GM12878 (cell line): ENCODE measurements at regions of chr6 and their contacts with region 1.

Region 1: GRCh38 chr6:30616811-30617564 is at the start of gene PPP1R10:
- DNase-seq: peak; percentile 100
- ATAC-seq: peak; percentile 81
- H3K4me3 ChIP-seq: peak within 1 kb of the TSS; percentile 80
- H3K27ac ChIP-seq: peak within 1 kb of the TSS; percentile 99
- H3K4me1 ChIP-seq: peaks cover 3% of the 10 kb centered on the region
- H3K27me3 ChIP-seq: no peaks in the 10 kb centered on the region
- CTCF ChIP-seq: no peak
- EP300 ChIP-seq: no peak; a peak in 1 of 4 replicates
- POLR2A ChIP-seq: peak; percentile 97
- RAD21 ChIP-seq: no peak
- polyA plus RNA-seq, gene PPP1R10: 11.3 to 22.6 TPM

Region 2: GRCh38 chr6:29051680-29052079 is 1565.3 kb before region 1 on chr6:
- CTCF ChIA-PET with region 1: no interaction called
- POLR2A ChIA-PET with region 1: no interaction called
- RAD21 ChIA-PET with region 1: no interaction called
- SMC1A ChIA-PET with region 1: no interaction called
- in situ Hi-C with region 1: no loop called
- intact Hi-C with region 1: no loop called
- DNase-seq: no peak
- ATAC-seq: no peak
- H3K4me3 ChIP-seq: no peak overlapping the region
- H3K27ac ChIP-seq: no peak overlapping the region
- H3K4me1 ChIP-seq: no peaks in the 10 kb centered on the region
- H3K27me3 ChIP-seq: no peaks in the 10 kb centered on the region
- CTCF ChIP-seq: no peak
- EP300 ChIP-seq: no peak
- POLR2A ChIP-seq: no peak
- RAD21 ChIP-seq: no peak

Region 3: DNA sequence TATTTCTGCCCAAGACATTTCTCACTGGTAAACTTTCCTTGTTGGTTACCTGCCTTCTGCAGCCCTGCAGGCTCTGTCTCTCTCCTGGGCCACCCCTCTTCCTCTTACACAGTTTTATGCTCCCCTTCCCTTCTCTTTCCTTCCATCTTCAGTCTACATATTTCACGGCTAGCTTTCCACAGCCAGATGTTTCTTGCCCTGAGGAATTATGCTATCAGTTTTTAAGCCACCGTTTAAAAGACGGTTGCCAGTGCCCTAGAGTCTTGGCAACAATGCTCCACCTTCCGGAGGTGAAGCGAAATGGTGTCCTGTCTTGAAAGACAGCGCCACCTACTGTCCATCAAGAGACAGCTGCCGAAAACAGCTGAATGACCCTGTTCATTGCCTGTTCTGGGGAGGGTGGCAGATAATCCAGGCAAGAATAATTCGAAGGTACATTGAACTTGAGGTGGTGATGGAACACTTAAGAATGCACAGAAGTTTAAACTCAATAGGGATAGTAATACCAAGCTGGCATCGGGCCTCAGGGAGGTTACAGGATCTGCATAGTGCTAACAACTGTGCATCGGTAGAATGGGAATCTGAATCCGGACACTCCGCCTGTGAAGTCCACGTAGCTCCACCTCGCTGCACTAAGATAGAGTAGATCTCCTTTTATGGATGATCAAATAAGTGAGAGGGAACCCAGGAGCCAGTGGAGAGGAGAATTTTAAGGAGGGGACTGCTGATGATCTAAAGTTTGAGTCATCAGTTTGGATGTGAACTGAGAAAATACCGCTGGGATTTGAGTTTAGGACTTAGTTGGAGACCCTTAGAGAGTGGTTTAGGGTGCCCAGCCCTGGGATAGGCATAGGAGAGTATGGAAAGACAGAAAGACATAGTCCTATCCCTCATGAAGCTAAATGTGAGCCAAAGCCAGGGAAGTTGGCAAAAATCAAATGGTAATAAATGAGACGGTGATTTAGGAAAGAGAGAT is 485.8 kb before region 1 on chr6:
- CTCF ChIA-PET with region 1: no interaction called
- POLR2A ChIA-PET with region 1: no interaction called
- RAD21 ChIA-PET with region 1: no interaction called
- SMC1A ChIA-PET with region 1: no interaction called
- in situ Hi-C with region 1: no loop called
- intact Hi-C with region 1: no loop called
- DNase-seq: peak; percentile 32
- ATAC-seq: peak; percentile 97
- H3K4me3 ChIP-seq: no peak overlapping the region
- H3K27ac ChIP-seq: no peak overlapping the region
- H3K4me1 ChIP-seq: peaks cover 5% of the 10 kb centered on the region
- H3K27me3 ChIP-seq: peaks cover 4 to 10% of the 10 kb centered on the region in 2 experiments
- CTCF ChIP-seq: peak; percentile 98 to 100 (median 100); a peak in 5 of 6 replicates
- EP300 ChIP-seq: no peak
- POLR2A ChIP-seq: no peak
- RAD21 ChIP-seq: peak; percentile 81

Region 4: DNA sequence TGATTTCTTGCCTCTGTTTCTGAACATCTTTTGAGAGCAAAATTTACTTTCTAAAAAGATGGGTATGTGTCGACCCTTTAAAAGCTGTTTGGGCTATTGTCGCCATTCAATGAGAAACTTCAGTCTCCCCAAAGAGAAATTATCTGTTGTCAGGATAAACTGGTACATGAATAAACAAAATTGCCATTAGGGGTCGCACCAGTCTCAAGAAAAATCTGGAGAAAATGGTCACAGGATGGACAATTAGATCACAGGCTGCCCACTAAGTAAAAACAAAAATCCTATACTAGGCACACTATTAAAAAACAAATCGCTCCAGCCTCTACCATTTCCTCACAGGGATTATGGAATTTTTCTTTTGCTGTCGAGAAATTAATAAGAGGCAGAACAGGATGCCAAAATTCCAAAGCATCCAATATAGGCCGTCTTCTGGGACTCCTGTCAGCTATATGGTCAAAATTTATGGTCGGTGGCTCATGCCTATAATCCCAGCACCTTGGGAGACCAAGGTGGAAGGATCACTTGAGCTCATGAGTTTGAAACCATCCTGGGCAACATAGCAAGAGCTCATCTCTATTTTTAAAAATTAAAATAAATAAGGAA is 133.2 kb before region 1 on chr6:
- CTCF ChIA-PET with region 1: interaction called, 17 read pairs
- POLR2A ChIA-PET with region 1: no interaction called
- RAD21 ChIA-PET with region 1: interaction called, 4 read pairs
- SMC1A ChIA-PET with region 1: interaction called, 7 read pairs
- in situ Hi-C with region 1: no loop called
- intact Hi-C with region 1: no loop called
- DNase-seq: peak; percentile 37
- ATAC-seq: peak; percentile 48
- H3K4me3 ChIP-seq: no peak overlapping the region
- H3K27ac ChIP-seq: no peak overlapping the region
- H3K4me1 ChIP-seq: peaks cover 12% of the 10 kb centered on the region; the same call in 1 of the 2 replicates
- H3K27me3 ChIP-seq: peaks cover 2 to 8% of the 10 kb centered on the region in 2 experiments; a peak in 3 of 4 replicates
- CTCF ChIP-seq: peak; percentile 47 to 73 (median 56); a peak in 5 of 6 replicates
- EP300 ChIP-seq: no peak
- POLR2A ChIP-seq: no peak
- RAD21 ChIP-seq: peak; percentile 90

Region 5: DNA sequence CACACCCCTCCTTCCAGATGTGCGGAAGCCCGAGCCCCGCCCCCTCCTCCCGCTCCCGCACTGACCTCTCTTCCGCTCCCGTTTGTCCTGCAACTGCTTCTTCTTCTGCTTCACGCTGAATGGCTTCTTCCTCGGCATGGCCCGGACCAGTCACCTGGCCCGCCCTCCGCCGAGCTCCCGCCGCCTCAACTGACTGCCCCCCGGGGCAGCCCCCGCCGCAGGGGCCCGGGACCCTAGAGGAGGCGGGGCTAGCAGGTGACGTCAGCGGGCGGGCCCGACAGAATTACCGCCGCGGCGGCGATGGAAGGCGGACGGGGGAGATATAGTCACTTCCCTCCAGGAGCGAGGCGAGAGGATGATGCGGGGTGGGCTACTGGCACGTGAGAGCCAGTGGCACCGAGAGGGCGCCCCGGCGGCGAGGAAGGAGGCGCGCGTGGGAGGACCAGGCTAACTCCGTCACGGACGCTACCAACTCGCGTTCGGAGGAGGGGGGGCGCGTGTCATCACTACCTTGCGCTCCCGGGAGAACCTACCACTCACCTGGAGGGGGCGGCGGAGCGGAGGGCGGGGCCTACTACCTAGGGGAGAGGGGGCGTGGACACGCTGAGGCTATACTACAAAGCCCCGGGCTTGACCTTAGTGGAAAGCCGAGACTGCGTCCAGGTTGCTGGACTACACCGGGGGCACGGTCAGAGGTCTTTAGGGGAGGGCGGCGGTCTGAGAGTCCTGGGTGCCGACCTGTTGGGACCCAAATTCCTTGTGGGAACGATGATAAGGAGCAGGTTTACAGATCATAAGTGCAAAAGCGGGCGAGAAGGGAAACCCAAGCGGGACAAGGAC is 60.7 kb before region 1 on chr6 and contains the start of gene GNL1:
- CTCF ChIA-PET with region 1: interaction called, 5 read pairs
- POLR2A ChIA-PET with region 1: interaction called, 16 read pairs
- RAD21 ChIA-PET with region 1: no interaction called
- SMC1A ChIA-PET with region 1: interaction called, 5 read pairs
- in situ Hi-C with region 1: no loop called
- intact Hi-C with region 1: loop called (anchors 2 kb)
- DNase-seq: peak; percentile 79
- ATAC-seq: peak; percentile 94
- H3K4me3 ChIP-seq: peak within 1 kb of the TSS; percentile 86
- H3K27ac ChIP-seq: peak within 1 kb of the TSS; percentile 93
- H3K4me1 ChIP-seq: peaks cover 8% of the 10 kb centered on the region; the same call in 1 of the 2 replicates
- H3K27me3 ChIP-seq: no peaks in the 10 kb centered on the region
- CTCF ChIP-seq: no peak
- EP300 ChIP-seq: no peak
- POLR2A ChIP-seq: peak; percentile 89
- RAD21 ChIP-seq: no peak
- polyA plus RNA-seq, gene GNL1: 0.18 to 1.4 TPM

Region 6: GRCh38 chr6:30590994-30591393 is 26.0 kb before region 1 on chr6:
- CTCF ChIA-PET with region 1: interaction called, 41 read pairs
- POLR2A ChIA-PET with region 1: interaction called, 7 read pairs
- RAD21 ChIA-PET with region 1: no interaction called
- SMC1A ChIA-PET with region 1: interaction called, 11 read pairs
- in situ Hi-C with region 1: no loop called
- intact Hi-C with region 1: no loop called
- DNase-seq: no peak
- ATAC-seq: no peak
- H3K4me3 ChIP-seq: no peak overlapping the region
- H3K27ac ChIP-seq: no peak overlapping the region
- H3K4me1 ChIP-seq: no peaks in the 10 kb centered on the region
- H3K27me3 ChIP-seq: no peaks in the 10 kb centered on the region
- CTCF ChIP-seq: no peak
- EP300 ChIP-seq: no peak
- POLR2A ChIP-seq: no peak
- RAD21 ChIP-seq: no peak

Region 7: GRCh38 chr6:30672445-30673253 is 55.7 kb after region 1 on chr6 and contains the start of gene DHX16:
- CTCF ChIA-PET with region 1: interaction called, 12 read pairs
- POLR2A ChIA-PET with region 1: interaction called, 4 read pairs
- RAD21 ChIA-PET with region 1: interaction called, 6 read pairs
- SMC1A ChIA-PET with region 1: interaction called, 12 read pairs
- in situ Hi-C with region 1: no loop called
- intact Hi-C with region 1: loop called (anchors 2 kb)
- DNase-seq: peak; percentile 90
- ATAC-seq: peak; percentile 90
- H3K4me3 ChIP-seq: peak within 1 kb of the TSS; percentile 99
- H3K27ac ChIP-seq: peak within 1 kb of the TSS; percentile 79
- H3K4me1 ChIP-seq: peaks cover 8% of the 10 kb centered on the region
- H3K27me3 ChIP-seq: no peaks in the 10 kb centered on the region
- CTCF ChIP-seq: peak; percentile 77 to 93 (median 88); a peak in 5 of 6 replicates
- EP300 ChIP-seq: no peak
- POLR2A ChIP-seq: peak; percentile 70
- RAD21 ChIP-seq: peak; percentile 64
- polyA plus RNA-seq, gene DHX16: 10.1 to 17.7 TPM

Region 8: GRCh38 chr6:30717042-30717844 is 100.3 kb after region 1 on chr6 and contains the start of gene MDC1:
- CTCF ChIA-PET with region 1: interaction called, 7 read pairs
- POLR2A ChIA-PET with region 1: interaction called, 9 read pairs
- RAD21 ChIA-PET with region 1: interaction called, 7 read pairs
- SMC1A ChIA-PET with region 1: interaction called, 4 read pairs
- in situ Hi-C with region 1: loop called (anchors 5 kb)
- intact Hi-C with region 1: loop called (anchors 1 kb)
- DNase-seq: peak; percentile 99
- ATAC-seq: peak; percentile 76
- H3K4me3 ChIP-seq: peak within 1 kb of the TSS; percentile 83
- H3K27ac ChIP-seq: peak within 1 kb of the TSS; percentile 98
- H3K4me1 ChIP-seq: peaks cover 16% of the 10 kb centered on the region
- H3K27me3 ChIP-seq: no peaks in the 10 kb centered on the region
- CTCF ChIP-seq: peak; percentile 8 to 29 (median 17); a peak in 3 of 6 replicates
- EP300 ChIP-seq: peak; percentile 39 to 52; a peak in 1 of 4 replicates
- POLR2A ChIP-seq: peak; percentile 80
- RAD21 ChIP-seq: no peak; the same call in 1 of the 2 replicates
- polyA plus RNA-seq, gene MDC1: 5.1 to 6.5 TPM